ENCODE measurements at regions of chr1 and their contacts with region 1.

Region 1: DNA sequence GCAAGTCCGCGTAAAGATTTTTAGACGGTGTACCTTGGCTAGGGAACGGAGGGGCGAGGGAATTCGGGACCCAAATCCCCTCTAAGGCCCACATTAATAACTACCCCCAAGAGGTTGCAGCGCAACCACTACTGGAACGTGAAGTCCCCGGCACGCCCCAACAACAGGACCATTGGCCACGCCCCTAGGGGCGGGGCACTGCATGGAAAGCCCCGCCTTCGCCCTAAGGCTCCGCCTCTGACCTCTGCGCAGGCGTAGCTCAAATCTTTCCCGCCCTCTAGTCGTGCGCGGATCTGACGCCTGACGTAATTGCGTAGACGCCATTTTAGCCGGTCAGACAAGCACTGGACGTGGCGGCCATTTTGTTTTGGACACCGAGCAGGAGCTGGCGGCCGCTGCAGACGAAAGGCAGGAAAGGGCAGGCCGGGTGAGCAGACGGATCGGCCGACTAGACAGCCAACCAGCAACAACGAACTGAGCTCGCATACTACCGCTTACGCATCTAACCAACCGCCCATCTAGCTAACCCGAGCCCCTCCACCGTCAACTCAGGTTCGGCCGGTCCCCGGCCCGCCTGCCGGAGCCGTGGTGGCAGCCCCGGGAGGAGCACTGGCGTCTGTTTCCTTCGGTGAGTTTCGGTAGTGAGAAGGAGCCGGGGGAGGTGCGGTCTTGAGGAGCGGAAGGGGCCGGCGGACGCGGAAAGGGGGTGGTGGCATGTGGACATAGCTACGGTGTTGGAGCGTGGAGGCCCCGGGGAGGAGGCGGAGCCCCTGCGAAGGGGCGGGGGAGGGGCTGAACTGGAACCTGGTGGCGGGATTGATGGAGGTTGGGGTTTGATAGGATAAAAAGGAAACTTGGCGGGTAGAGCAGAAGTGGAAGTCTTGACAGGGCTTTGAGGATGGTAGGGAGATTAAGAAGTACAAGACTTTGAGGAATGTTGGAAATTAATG is at the start of gene CHTOP:
- DNase-seq: peak; percentile 91 to 99 (median 96)
- ATAC-seq: peak; percentile 91
- H3K4me3 ChIP-seq: peak within 1 kb of the TSS; percentile 98 to 100
- H3K4me3 Mint-ChIP-seq: peak within 1 kb of the TSS; percentile 100
- H3K27ac ChIP-seq: peak within 1 kb of the TSS; percentile 99 to 100
- H3K27ac Mint-ChIP-seq: peak within 1 kb of the TSS; percentile 100
- H3K4me1 ChIP-seq: peaks cover 19% of the 10 kb centered on the region
- H3K4me1 Mint-ChIP-seq: peaks cover 36% of the 10 kb centered on the region
- H3K27me3 ChIP-seq: no peaks in the 10 kb centered on the region
- H3K27me3 Mint-ChIP-seq: no peaks in the 10 kb centered on the region
- CTCF ChIP-seq: no peak
- total RNA-seq, gene CHTOP: 79.1 to 81.2 TPM

Region 2: DNA sequence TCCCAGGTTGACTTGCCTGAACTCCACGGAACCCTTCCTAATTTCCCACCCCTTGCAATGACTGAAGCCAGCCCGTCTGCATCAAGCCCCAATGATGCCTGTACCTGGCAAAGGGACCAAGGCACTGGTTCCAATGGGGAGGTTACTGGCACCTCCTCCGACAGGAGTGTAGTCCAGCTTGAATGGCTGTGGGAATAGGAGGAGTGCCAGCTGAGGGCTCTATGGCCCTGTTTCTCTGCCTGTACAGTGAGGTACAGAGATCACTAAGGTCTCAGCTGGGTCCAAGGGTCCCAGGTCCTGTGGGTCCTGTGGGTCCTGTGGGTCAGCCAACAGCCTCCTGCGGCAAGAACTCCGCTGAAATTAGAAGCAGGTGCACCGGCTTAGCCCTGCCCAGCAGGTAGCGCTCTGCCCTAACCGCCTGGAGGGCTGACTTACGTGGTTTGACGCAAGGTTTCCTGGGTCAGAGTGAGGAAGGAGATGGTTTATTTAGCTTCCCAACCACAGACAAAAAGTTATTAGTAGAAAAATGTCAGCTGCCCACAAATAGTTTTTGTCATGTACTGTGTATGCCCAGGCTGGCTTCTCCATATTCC is 673.4 kb before region 1 on chr1:
- CTCF ChIA-PET with region 1: no interaction called
- POLR2A ChIA-PET with region 1: no interaction called
- intact Hi-C with region 1: no loop called
- DNase-seq: no peak
- ATAC-seq: no peak
- H3K4me3 ChIP-seq: no peak overlapping the region
- H3K4me3 Mint-ChIP-seq: no peak overlapping the region
- H3K27ac ChIP-seq: no peak overlapping the region
- H3K27ac Mint-ChIP-seq: no peak overlapping the region
- H3K4me1 ChIP-seq: no peaks in the 10 kb centered on the region
- H3K4me1 Mint-ChIP-seq: no peaks in the 10 kb centered on the region
- H3K27me3 ChIP-seq: no peaks in the 10 kb centered on the region
- H3K27me3 Mint-ChIP-seq: peaks cover 12% of the 10 kb centered on the region
- CTCF ChIP-seq: no peak

Region 3: GRCh38 chr1:153545067-153546055 is 88.6 kb before region 1 on chr1 and contains the start of gene S100A4:
- CTCF ChIA-PET with region 1: no interaction called
- POLR2A ChIA-PET with region 1: interaction called, 19 read pairs
- intact Hi-C with region 1: no loop called
- DNase-seq: peak; percentile 47 to 91 (median 83)
- ATAC-seq: peak; percentile 74
- H3K4me3 ChIP-seq: peak within 1 kb of the TSS; percentile 56 to 64
- H3K4me3 Mint-ChIP-seq: peak within 1 kb of the TSS; percentile 87
- H3K27ac ChIP-seq: peak within 1 kb of the TSS; percentile 66 to 69
- H3K27ac Mint-ChIP-seq: peak within 1 kb of the TSS; percentile 91
- H3K4me1 ChIP-seq: peaks cover 65% of the 10 kb centered on the region
- H3K4me1 Mint-ChIP-seq: peaks cover 66% of the 10 kb centered on the region
- H3K27me3 ChIP-seq: no peaks in the 10 kb centered on the region
- H3K27me3 Mint-ChIP-seq: no peaks in the 10 kb centered on the region
- CTCF ChIP-seq: no peak
- total RNA-seq, gene S100A4: 172 to 177 TPM

Region 4: DNA sequence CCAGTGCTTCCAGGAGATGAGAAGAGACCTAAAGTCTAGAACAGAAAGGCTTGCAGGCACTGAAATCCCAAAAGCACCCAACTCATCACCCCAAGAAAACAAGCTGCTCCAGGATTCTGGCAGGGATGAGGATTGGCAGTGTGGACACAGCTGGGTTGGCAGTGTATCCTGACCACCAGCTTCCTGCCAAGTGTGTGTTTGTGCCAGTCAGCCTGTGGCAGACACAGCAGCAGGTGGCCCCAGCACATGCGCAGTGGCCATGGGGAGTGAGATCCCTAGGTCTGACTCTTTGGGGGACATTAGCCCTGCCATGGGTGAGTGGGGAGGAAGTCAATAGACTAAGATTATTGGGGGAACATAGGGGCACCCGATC is 15.9 kb after region 1 on chr1:
- CTCF ChIA-PET with region 1: interaction called, 3 read pairs
- POLR2A ChIA-PET with region 1: interaction called, 33 read pairs
- intact Hi-C with region 1: no loop called
- DNase-seq: peak in 1 of 9 experiments; percentile 38
- ATAC-seq: peak; percentile 15
- H3K4me3 ChIP-seq: peak overlapping the region in 1 of 2 experiments; percentile 18
- H3K4me3 Mint-ChIP-seq: peak overlapping the region; percentile 77
- H3K27ac ChIP-seq: peak overlapping the region; percentile 24 to 54
- H3K27ac Mint-ChIP-seq: peak overlapping the region; percentile 94
- H3K4me1 ChIP-seq: peaks cover 49% of the 10 kb centered on the region
- H3K4me1 Mint-ChIP-seq: peaks cover 46% of the 10 kb centered on the region
- H3K27me3 ChIP-seq: no peaks in the 10 kb centered on the region
- H3K27me3 Mint-ChIP-seq: no peaks in the 10 kb centered on the region
- CTCF ChIP-seq: no peak

Region 5: DNA sequence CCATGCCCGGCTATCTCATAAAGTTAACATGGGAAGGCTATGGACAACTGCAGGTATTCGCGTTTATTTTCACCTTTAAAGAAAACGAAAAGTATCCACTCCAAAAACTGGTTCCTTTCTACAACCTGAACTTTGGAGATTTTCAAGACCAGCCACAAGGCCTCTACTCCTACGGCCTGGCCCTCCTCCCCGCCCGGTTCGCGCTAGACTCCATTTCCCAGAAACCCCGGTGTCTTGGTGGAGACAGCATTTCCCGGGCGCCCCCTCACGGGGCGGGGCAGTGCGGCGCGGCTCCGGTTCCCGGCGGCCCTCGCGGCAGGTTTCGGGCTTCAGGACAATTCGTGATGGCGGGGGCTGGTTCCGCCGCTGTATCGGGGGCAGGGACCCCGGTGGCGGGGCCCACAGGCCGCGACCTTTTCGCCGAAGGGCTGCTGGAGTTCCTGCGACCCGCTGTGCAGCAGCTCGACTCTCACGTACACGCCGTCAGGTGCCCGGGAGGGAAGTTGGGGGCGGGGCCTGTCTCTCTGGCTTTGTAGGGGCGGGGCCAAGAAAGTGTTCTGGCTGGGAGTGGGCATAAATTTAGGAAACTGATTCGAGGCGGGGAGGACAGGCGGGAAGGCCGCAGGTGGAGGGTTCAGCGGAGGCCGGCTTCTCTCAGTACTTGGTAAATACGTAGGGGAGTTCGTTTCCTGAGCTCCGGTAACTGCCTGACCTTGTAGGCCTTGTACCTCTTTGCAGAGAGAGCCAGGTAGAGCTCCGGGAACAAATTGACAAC is 24.6 kb after region 1 on chr1 and contains the start of gene SNAPIN:
- CTCF ChIA-PET with region 1: no interaction called
- POLR2A ChIA-PET with region 1: interaction called, 17 read pairs
- intact Hi-C with region 1: loop called (anchors 1 kb)
- DNase-seq: peak; percentile 75 to 93 (median 88)
- ATAC-seq: peak; percentile 96
- H3K4me3 ChIP-seq: peak within 1 kb of the TSS; percentile 83 to 85
- H3K4me3 Mint-ChIP-seq: peak within 1 kb of the TSS; percentile 96
- H3K27ac ChIP-seq: peak within 1 kb of the TSS; percentile 66 to 90
- H3K27ac Mint-ChIP-seq: peak within 1 kb of the TSS; percentile 92
- H3K4me1 ChIP-seq: peaks cover 12% of the 10 kb centered on the region
- H3K4me1 Mint-ChIP-seq: peaks cover 12% of the 10 kb centered on the region
- H3K27me3 ChIP-seq: no peaks in the 10 kb centered on the region
- H3K27me3 Mint-ChIP-seq: no peaks in the 10 kb centered on the region
- CTCF ChIP-seq: no peak
- total RNA-seq, gene SNAPIN: 6.1 to 6.5 TPM

Region 6: DNA sequence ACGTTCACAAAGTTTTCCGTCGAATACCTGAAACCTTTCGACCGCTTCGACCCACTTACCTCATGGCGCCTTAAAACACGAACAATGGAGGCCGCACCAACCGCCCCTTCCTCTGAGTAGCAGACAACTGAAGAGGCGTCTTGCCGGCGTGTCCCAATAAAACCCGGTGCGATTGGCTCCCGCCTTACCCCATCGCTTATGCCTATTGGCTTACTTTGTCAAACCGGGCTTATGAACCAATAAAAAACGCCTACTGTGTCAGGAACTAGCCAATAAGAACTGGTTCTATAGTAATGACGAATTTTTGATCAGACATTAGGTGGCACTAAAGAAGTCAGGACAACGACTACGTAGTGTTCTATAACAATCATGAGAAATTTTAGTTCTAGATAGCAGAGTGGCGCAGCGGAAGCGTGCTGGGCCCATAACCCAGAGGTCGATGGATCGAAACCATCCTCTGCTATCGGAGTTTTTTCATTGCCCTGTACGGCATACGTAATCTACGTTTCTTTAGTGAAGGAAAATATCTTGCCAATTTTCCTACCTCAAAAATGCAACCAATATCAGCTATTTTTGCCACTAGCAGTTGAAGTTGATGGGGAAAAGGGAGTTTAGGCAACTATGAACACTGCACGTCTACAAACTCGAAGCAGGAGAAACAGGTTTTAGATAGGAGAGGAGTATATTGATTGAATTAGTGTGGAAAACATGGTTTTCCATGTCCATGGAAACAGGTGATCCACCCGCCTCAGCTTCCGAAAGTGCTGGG is 37.1 kb after region 1 on chr1 and contains the start of gene ILF2:
- CTCF ChIA-PET with region 1: no interaction called
- POLR2A ChIA-PET with region 1: interaction called, 9 read pairs
- intact Hi-C with region 1: loop called (anchors 1 to 2 kb)
- DNase-seq: peak; percentile 89 to 99 (median 97)
- ATAC-seq: peak; percentile 87
- H3K4me3 ChIP-seq: peak within 1 kb of the TSS; percentile 76 to 81
- H3K4me3 Mint-ChIP-seq: no peak within 1 kb of the TSS
- H3K27ac ChIP-seq: peak within 1 kb of the TSS; percentile 89 to 94
- H3K27ac Mint-ChIP-seq: peak within 1 kb of the TSS; percentile 67
- H3K4me1 ChIP-seq: peaks cover 22% of the 10 kb centered on the region
- H3K4me1 Mint-ChIP-seq: peaks cover 20% of the 10 kb centered on the region
- H3K27me3 ChIP-seq: no peaks in the 10 kb centered on the region
- H3K27me3 Mint-ChIP-seq: peaks cover under 1% of the 10 kb centered on the region
- CTCF ChIP-seq: no peak
- total RNA-seq, gene ILF2: 150 to 156 TPM

Region 7: GRCh38 chr1:153727463-153728304 is 93.7 kb after region 1 on chr1 and contains the start of gene INTS3:
- CTCF ChIA-PET with region 1: no interaction called
- POLR2A ChIA-PET with region 1: interaction called, 15 read pairs
- intact Hi-C with region 1: loop called in 1 of 2 experiments (anchors 1 kb)
- DNase-seq: peak; percentile 97 to 100 (median 99)
- ATAC-seq: peak; percentile 98
- H3K4me3 ChIP-seq: peak within 1 kb of the TSS; percentile 86 to 93
- H3K4me3 Mint-ChIP-seq: peak within 1 kb of the TSS; percentile 93
- H3K27ac ChIP-seq: peak within 1 kb of the TSS; percentile 91 to 96
- H3K27ac Mint-ChIP-seq: peak within 1 kb of the TSS; percentile 99
- H3K4me1 ChIP-seq: peaks cover 21% of the 10 kb centered on the region
- H3K4me1 Mint-ChIP-seq: peaks cover 34% of the 10 kb centered on the region
- H3K27me3 ChIP-seq: no peaks in the 10 kb centered on the region
- H3K27me3 Mint-ChIP-seq: no peaks in the 10 kb centered on the region
- CTCF ChIP-seq: no peak
- total RNA-seq, gene INTS3: 21.6 to 23.5 TPM

Region 8: DNA sequence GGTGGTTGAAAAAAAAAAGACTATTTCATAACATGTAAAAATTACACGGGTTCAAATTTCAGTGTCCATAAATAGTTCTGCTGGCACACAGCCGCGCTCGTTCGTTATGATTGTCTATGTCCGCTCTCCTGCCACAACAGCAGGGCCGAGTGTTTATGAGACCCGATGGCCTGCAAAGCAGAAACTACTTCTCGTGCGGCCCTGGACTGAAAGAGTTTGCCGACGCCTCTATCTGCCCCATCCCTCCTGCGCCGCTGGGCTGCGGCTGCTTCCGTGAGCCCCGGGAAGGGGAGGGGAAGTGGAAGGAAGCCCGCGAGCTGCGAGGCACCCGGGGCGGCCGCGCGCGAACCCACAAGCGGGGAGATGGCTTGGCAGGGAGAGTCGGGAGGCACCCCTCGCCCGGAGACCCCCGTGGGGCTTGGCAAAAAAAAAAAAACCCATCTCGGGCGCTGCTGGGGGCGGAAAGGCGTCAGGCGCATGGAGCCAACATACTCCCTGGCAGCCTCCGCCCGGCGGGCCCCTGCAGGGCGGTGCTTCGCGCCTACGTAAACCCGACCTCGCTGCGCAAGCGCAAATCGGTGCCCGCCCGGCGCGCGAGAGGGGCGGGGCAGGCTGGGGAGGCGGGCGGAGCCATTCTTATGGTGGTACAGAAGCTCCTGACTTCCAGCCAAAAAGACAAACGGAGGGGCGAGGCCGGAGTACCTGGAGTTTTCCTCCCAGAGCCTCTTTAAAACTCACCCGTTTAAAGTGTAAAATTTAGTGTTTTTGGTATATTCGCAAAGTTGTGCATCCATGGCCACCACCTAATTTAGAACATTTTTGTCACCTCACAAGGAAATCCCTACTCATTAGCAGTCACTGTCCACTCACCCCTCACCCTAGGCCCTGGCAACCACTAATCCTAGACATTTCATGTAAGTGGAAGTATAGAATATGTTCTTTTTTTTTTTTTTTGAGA is 149.5 kb after region 1 on chr1:
- CTCF ChIA-PET with region 1: no interaction called
- POLR2A ChIA-PET with region 1: interaction called, 3 read pairs
- intact Hi-C with region 1: loop called in 1 of 2 experiments (anchors 1 kb)
- DNase-seq: peak; percentile 84 to 96 (median 91)
- ATAC-seq: peak; percentile 98
- H3K4me3 ChIP-seq: peak overlapping the region; percentile 91 to 93
- H3K4me3 Mint-ChIP-seq: peak overlapping the region; percentile 88
- H3K27ac ChIP-seq: peak overlapping the region; percentile 92 to 99
- H3K27ac Mint-ChIP-seq: peak overlapping the region; percentile 95
- H3K4me1 ChIP-seq: peaks cover 12% of the 10 kb centered on the region
- H3K4me1 Mint-ChIP-seq: peaks cover 10% of the 10 kb centered on the region
- H3K27me3 ChIP-seq: no peaks in the 10 kb centered on the region
- H3K27me3 Mint-ChIP-seq: no peaks in the 10 kb centered on the region
- CTCF ChIP-seq: no peak

Measured in CD8-positive, alpha-beta T cell (primary cell).